Activated CD4-positive, alpha-beta memory T cell treated with anti-CD3 and anti-CD28 coated beads, Interleukin-2, amount 10 ng/mL, durations not matched to agents 7 days and 5 days (primary cell): ENCODE measurements at regions of chr1 and their contacts with region 1.

Region 1: DNA sequence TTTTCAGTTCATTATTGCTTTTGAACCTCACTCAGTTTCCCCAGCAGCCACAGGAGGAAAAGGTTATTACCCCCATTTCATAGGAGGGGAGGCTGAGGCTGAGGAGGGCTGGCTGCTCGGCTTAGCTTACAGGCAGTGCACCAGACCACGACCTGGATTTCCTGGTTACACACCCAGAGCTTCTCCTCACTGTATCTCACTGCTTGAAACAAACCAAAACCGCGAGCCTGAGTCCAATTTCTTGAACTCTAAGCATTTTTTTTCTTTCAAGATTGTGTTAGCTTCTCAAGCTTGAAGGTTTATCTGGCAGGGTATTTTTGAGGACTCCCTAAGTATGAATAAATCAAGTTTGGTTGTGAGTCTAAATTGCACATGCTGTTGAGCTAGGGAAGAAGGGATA is 188.9 kb upstream of the EDN2 start:
- DNase-seq: peak; percentile 75
- H3K4me3 Mint-ChIP-seq: peak overlapping the region; percentile 54
- H3K27ac Mint-ChIP-seq: peak overlapping the region; percentile 98
- H3K4me1 Mint-ChIP-seq: peaks cover 98% of the 10 kb centered on the region
- H3K27me3 Mint-ChIP-seq: no peaks in the 10 kb centered on the region

Region 2: DNA sequence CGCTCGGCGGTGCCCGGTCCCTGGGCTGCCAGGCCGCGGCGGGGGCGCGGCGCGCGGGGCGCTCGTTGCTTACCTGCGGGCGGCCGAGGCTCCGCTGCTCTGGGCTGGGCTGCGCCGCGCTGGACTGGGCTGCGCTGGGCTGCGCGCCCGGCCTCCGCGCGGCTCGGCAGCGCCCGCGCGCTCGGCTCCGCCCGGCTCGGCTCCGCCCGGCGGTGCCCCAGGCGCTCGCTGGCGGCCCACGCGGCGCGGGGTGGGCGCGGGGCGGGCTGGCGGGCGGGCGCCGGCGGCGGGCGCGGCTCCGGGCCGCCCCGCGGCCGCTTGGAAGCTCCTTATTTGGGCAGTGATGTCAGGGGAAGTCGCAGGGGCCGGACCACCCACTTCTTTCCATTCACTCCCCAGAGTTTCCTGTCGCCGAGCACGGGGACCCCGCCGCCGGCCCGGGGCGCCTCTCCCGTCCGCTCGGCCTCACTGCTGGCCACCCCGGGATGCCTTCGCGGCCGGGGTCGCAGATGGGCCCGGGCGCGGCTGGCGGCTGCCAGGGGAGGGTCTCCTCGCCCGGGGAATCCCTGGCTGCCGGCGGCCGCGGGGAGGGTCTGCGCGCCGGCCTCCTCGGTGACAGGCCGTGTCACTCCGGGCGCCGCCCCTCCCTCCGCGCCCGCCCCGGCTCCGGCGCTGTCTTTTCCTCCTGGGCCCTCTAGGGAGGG is 11.2 kb before region 1 on chr1:
- CTCF ChIA-PET with region 1: interaction called, 37 read pairs
- POLR2A ChIA-PET with region 1: interaction called, 79 read pairs
- DNase-seq: peak; percentile 84
- H3K4me3 Mint-ChIP-seq: peak overlapping the region; percentile 66
- H3K27ac Mint-ChIP-seq: peak overlapping the region; percentile 74
- H3K4me1 Mint-ChIP-seq: peaks cover 83% of the 10 kb centered on the region
- H3K27me3 Mint-ChIP-seq: no peaks in the 10 kb centered on the region

Region 3: GRCh38 chr1:41708332-41708731 is 35.0 kb after region 1 on chr1:
- CTCF ChIA-PET with region 1: no interaction called
- POLR2A ChIA-PET with region 1: no interaction called
- DNase-seq: no peak
- H3K4me3 Mint-ChIP-seq: no peak overlapping the region
- H3K27ac Mint-ChIP-seq: no peak overlapping the region
- H3K4me1 Mint-ChIP-seq: peaks cover 13% of the 10 kb centered on the region
- H3K27me3 Mint-ChIP-seq: no peaks in the 10 kb centered on the region

Region 4: DNA sequence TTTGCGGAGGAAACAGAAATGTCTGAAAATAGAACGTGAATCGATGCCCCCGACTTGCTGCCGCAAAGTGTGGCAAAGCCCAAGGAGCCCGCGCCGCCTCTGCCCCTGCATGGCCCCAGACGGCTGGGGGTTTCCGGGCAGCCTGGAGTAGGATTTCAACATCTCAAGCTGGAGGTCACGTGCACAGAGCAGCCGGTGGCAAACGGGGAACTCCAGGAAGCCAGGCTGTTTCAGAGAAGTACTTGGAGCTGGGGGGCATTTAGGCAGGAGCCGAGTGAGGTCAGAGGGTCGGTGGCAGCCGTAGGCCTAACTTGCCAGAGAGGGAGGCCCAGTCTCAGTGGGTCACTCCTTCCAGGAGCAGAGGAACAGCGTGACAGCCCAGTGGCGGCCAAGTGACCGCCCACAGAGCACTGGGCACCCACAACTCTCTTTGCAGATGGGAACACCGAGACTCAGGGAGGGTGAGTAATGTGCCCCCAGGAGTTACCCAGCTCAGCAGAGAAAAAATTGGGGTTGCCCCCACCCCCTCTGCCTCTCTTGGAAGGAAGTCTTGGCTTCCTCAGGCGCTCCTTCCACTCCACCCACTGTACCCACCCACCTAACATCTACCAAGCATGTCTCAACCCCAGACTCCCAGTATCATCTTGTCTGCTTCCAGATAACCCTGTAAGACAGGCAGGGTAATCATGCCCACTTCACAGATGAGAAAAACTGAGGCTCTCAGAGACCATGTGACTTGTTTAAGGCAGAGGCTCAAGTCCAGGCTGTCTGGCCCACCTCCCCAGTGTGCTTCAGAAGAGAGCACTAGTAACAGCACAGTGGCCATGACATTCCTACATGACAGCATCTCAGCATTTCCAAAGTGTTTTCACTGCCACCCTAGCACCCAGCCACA is 65.9 kb after region 1 on chr1:
- CTCF ChIA-PET with region 1: no interaction called
- POLR2A ChIA-PET with region 1: interaction called, 19 read pairs
- DNase-seq: peak; percentile 82
- H3K4me3 Mint-ChIP-seq: peak overlapping the region; percentile 68
- H3K27ac Mint-ChIP-seq: peak overlapping the region; percentile 93
- H3K4me1 Mint-ChIP-seq: peaks cover 77% of the 10 kb centered on the region
- H3K27me3 Mint-ChIP-seq: no peaks in the 10 kb centered on the region

Region 5: GRCh38 chr1:41758904-41759548 is 85.6 kb after region 1 on chr1:
- CTCF ChIA-PET with region 1: no interaction called
- POLR2A ChIA-PET with region 1: no interaction called
- DNase-seq: no peak
- H3K4me3 Mint-ChIP-seq: no peak overlapping the region
- H3K27ac Mint-ChIP-seq: no peak overlapping the region
- H3K4me1 Mint-ChIP-seq: peaks cover 18% of the 10 kb centered on the region
- H3K27me3 Mint-ChIP-seq: peaks cover under 1% of the 10 kb centered on the region

Region 6: GRCh38 chr1:41791667-41792484 is 118.5 kb after region 1 on chr1:
- CTCF ChIA-PET with region 1: no interaction called
- POLR2A ChIA-PET with region 1: interaction called, 10 read pairs
- DNase-seq: peak; percentile 63
- H3K4me3 Mint-ChIP-seq: peak overlapping the region; percentile 53
- H3K27ac Mint-ChIP-seq: peak overlapping the region; percentile 93
- H3K4me1 Mint-ChIP-seq: peaks cover 57% of the 10 kb centered on the region
- H3K27me3 Mint-ChIP-seq: no peaks in the 10 kb centered on the region

Region 7: DNA sequence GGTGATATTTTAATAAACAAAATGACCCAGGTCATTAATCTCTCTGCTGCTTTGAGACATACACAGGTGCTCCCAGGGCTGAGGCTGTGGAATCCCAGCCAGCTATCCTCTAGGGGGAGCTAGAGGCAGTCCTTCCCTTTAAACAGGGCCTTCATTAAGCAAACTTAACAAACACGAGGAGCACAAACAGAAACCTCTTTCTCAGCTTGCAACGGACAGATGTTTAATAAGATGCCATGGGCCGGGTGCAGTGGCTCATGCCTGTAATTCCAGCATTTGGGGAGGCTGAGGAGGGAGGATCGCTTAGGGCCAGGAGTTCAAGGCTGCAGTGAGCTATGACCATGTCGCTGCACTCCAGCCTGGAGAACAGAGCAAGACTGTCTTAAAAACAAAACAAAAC is 138.7 kb after region 1 on chr1:
- CTCF ChIA-PET with region 1: interaction called, 14 read pairs
- POLR2A ChIA-PET with region 1: interaction called, 4 read pairs
- DNase-seq: peak; percentile 74
- H3K4me3 Mint-ChIP-seq: no peak overlapping the region
- H3K27ac Mint-ChIP-seq: peak overlapping the region; percentile 18
- H3K4me1 Mint-ChIP-seq: peaks cover 50% of the 10 kb centered on the region
- H3K27me3 Mint-ChIP-seq: no peaks in the 10 kb centered on the region

Region 8: GRCh38 chr1:41919764-41920397 is 246.5 kb after region 1 on chr1:
- CTCF ChIA-PET with region 1: interaction called, 4 read pairs
- POLR2A ChIA-PET with region 1: interaction called, 14 read pairs
- DNase-seq: peak; percentile 93
- H3K4me3 Mint-ChIP-seq: peak overlapping the region; percentile 93
- H3K27ac Mint-ChIP-seq: peak overlapping the region; percentile 93
- H3K4me1 Mint-ChIP-seq: peaks cover 56% of the 10 kb centered on the region
- H3K27me3 Mint-ChIP-seq: no peaks in the 10 kb centered on the region